Naive thymus-derived CD4-positive, alpha-beta T cell (primary cell): ENCODE measurements at regions of chr10 and their contacts with region 1.

Region 1: DNA sequence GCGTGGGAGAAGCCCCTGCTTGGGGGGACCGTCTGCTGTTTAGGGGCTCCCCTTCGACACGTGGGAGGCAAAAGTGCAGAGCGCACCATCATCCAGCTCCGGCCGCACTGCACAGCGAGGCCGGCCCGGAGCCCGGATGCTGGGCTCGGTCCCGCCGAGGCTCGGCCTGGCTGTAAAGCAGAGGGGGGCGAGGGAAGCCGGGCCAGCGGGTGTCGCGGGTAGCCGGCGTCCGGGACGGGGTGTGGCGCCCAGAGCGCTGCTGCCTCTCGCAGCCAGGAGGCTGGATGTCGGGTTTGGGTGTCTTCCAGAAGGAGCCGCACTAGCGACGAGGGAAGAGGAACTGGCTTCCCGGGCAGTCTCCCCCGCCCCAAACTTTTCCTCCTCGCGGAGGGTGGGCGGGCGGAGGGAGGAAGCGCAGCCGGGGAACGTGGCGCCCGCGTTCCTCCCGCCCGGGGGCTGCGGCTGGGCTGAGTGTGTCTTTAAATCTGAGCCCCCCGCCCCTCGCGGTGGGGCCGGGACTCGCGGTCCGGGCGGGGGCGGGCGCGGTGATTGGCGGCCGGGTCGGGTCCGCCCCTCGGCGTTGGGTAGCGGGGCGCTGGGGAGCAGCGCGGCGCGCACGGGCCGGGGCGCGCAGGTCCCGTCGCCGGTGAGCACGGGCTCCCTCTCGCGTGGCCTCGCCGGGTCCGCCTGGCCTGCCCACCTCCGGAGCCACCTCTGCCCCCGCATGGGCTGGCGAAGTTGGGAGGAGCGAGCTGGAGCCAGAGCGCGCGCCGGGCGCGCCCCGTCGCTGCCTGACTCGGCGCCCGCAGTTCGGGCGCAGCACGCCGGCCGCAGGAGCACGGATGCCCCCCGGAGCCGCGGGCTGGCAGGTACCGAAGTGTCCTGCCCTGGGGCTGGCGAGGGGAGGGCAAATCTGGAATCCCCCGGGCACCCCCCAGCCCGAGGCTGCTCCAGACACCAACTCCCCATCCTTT is at the start of gene PALD1:
- DNase-seq: peak in 5 of 9 donors; percentile 13 to 71 (median 24)
- ATAC-seq: no peak
- H3K4me3 ChIP-seq: peak within 1 kb of the TSS; percentile 56
- H3K4me3 Mint-ChIP-seq: peak within 1 kb of the TSS; percentile 78 to 90 (median 84)
- H3K27ac ChIP-seq: peak within 1 kb of the TSS; percentile 33
- H3K27ac Mint-ChIP-seq: peak within 1 kb of the TSS; percentile 56 to 93 (median 75)
- H3K4me1 ChIP-seq: peaks cover 29 to 51% of the 10 kb centered on the region in 2 donors
- H3K4me1 Mint-ChIP-seq: peaks cover 28 to 65% (median 56%) of the 10 kb centered on the region in 7 donors
- H3K27me3 ChIP-seq: peaks cover 0 to 4% of the 10 kb centered on the region in 2 donors
- H3K27me3 Mint-ChIP-seq: peaks cover 0 to 74% (median 0%) of the 10 kb centered on the region in 5 donors
- total RNA-seq, gene PALD1: 0.08 to 0.39 (median 0.19) TPM

Region 2: GRCh38 chr10:70169649-70170364 is 308.7 kb before region 1 on chr10:
- CTCF ChIA-PET with region 1: no interaction called
- POLR2A ChIA-PET with region 1: no interaction called
- intact Hi-C with region 1: loop called in 1 of 2 experiments (anchors 2 kb)
- DNase-seq: peak in 2 of 9 donors; percentile 8 to 30
- ATAC-seq: peak; percentile 18
- H3K4me3 ChIP-seq: peak overlapping the region; percentile 88
- H3K4me3 Mint-ChIP-seq: peak overlapping the region; percentile 86 to 97 (median 94)
- H3K27ac ChIP-seq: peak overlapping the region; percentile 95
- H3K27ac Mint-ChIP-seq: peak overlapping the region; percentile 83 to 98 (median 96)
- H3K4me1 ChIP-seq: peaks cover 47 to 49% of the 10 kb centered on the region in 2 donors
- H3K4me1 Mint-ChIP-seq: peaks cover 46 to 70% (median 65%) of the 10 kb centered on the region in 7 donors
- H3K27me3 ChIP-seq: no peaks in the 10 kb centered on the region
- H3K27me3 Mint-ChIP-seq: no peaks in the 10 kb centered on the region

Region 3: DNA sequence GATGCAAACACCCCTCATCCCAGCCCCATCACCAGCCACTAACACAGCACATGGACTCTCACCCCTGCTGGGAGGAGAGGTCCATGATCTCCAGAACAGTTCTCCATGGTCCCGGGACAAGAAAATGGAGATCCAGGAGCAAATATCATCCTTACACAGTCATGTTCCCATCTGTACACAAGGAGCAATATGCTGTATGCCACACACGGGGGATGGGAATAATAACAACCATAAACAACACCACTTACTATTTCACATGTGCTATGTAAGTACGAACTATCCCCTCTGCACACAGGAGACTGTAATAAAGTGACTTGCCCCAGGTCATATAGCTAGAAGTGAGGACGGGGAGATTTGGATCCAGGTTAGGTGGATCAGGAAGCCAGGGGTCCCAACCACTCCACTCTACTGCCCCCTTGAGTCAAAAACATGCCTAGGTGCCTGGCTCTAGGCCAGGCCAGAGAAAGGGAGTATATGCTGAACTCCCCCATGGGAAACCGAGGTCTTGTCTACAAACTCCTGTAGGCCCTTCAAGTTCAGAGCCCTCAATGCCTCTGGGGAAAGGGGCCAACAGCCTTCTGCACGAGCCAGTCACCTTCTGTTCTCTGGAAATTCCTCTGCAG is 130.1 kb before region 1 on chr10:
- CTCF ChIA-PET with region 1: no interaction called
- POLR2A ChIA-PET with region 1: no interaction called
- intact Hi-C with region 1: no loop called
- DNase-seq: peak in 2 of 9 donors; percentile 16 to 25
- ATAC-seq: peak; percentile 58
- H3K4me3 ChIP-seq: no peak overlapping the region
- H3K4me3 Mint-ChIP-seq: no peak overlapping the region
- H3K27ac ChIP-seq: no peak overlapping the region
- H3K27ac Mint-ChIP-seq: no peak overlapping the region
- H3K4me1 ChIP-seq: no peaks in the 10 kb centered on the region
- H3K4me1 Mint-ChIP-seq: peaks cover 0 to 3% (median 0%) of the 10 kb centered on the region in 7 donors
- H3K27me3 ChIP-seq: no peaks in the 10 kb centered on the region
- H3K27me3 Mint-ChIP-seq: no peaks in the 10 kb centered on the region

Region 4: GRCh38 chr10:70381471-70382421 is 96.7 kb before region 1 on chr10:
- CTCF ChIA-PET with region 1: no interaction called
- POLR2A ChIA-PET with region 1: no interaction called
- intact Hi-C with region 1: loop called (anchors 5 kb)
- DNase-seq: peak in 6 of 9 donors; percentile 25 to 53 (median 40)
- ATAC-seq: peak; percentile 43
- H3K4me3 ChIP-seq: peak overlapping the region; percentile 94
- H3K4me3 Mint-ChIP-seq: peak overlapping the region; percentile 82 to 92 (median 90)
- H3K27ac ChIP-seq: peak overlapping the region; percentile 32
- H3K27ac Mint-ChIP-seq: peak overlapping the region in 6 of 9 donors; percentile 17 to 86 (median 46)
- H3K4me1 ChIP-seq: peaks cover 4 to 6% of the 10 kb centered on the region in 2 donors
- H3K4me1 Mint-ChIP-seq: peaks cover 2 to 20% (median 10%) of the 10 kb centered on the region in 7 donors
- H3K27me3 ChIP-seq: no peaks in the 10 kb centered on the region
- H3K27me3 Mint-ChIP-seq: no peaks in the 10 kb centered on the region

Region 5: GRCh38 chr10:70445718-70446657 is 32.5 kb before region 1 on chr10:
- CTCF ChIA-PET with region 1: no interaction called
- POLR2A ChIA-PET with region 1: no interaction called
- intact Hi-C with region 1: no loop called
- DNase-seq: no peak
- ATAC-seq: no peak
- H3K4me3 ChIP-seq: no peak overlapping the region
- H3K4me3 Mint-ChIP-seq: no peak overlapping the region
- H3K27ac ChIP-seq: no peak overlapping the region
- H3K27ac Mint-ChIP-seq: no peak overlapping the region
- H3K4me1 ChIP-seq: peaks cover 5 to 9% of the 10 kb centered on the region in 2 donors
- H3K4me1 Mint-ChIP-seq: peaks cover under 1 to 10% (median 5%) of the 10 kb centered on the region in 7 donors
- H3K27me3 ChIP-seq: peaks cover 0 to 13% of the 10 kb centered on the region in 2 donors
- H3K27me3 Mint-ChIP-seq: peaks cover 11 to 47% (median 19%) of the 10 kb centered on the region in 5 donors

Region 6: GRCh38 chr10:70461215-70461986 is 17.1 kb before region 1 on chr10:
- CTCF ChIA-PET with region 1: interaction called, 6 read pairs
- POLR2A ChIA-PET with region 1: no interaction called
- intact Hi-C with region 1: loop called in 1 of 2 experiments (anchors 1 kb)
- DNase-seq: peak in 6 of 9 donors; percentile 29 to 52 (median 42)
- ATAC-seq: peak; percentile 69
- H3K4me3 ChIP-seq: no peak overlapping the region
- H3K4me3 Mint-ChIP-seq: peak overlapping the region in 1 of 10 donors; percentile 12
- H3K27ac ChIP-seq: no peak overlapping the region
- H3K27ac Mint-ChIP-seq: peak overlapping the region in 2 of 9 donors; percentile 10 to 66
- H3K4me1 ChIP-seq: no peaks in the 10 kb centered on the region
- H3K4me1 Mint-ChIP-seq: peaks cover 0 to 8% (median 3%) of the 10 kb centered on the region in 7 donors
- H3K27me3 ChIP-seq: peaks cover 0 to 4% of the 10 kb centered on the region in 2 donors
- H3K27me3 Mint-ChIP-seq: peaks cover 23 to 46% (median 38%) of the 10 kb centered on the region in 5 donors

Region 7: GRCh38 chr10:70493660-70494234 is 15.3 kb after region 1 on chr10:
- CTCF ChIA-PET with region 1: no interaction called
- POLR2A ChIA-PET with region 1: no interaction called
- intact Hi-C with region 1: loop called (anchors 2 kb)
- DNase-seq: no peak
- ATAC-seq: no peak
- H3K4me3 ChIP-seq: no peak overlapping the region
- H3K4me3 Mint-ChIP-seq: no peak overlapping the region
- H3K27ac ChIP-seq: no peak overlapping the region
- H3K27ac Mint-ChIP-seq: no peak overlapping the region
- H3K4me1 ChIP-seq: peaks cover 0 to 4% of the 10 kb centered on the region in 2 donors
- H3K4me1 Mint-ChIP-seq: peaks cover 18 to 26% (median 21%) of the 10 kb centered on the region in 7 donors
- H3K27me3 ChIP-seq: no peaks in the 10 kb centered on the region
- H3K27me3 Mint-ChIP-seq: peaks cover 0 to 11% (median 0%) of the 10 kb centered on the region in 5 donors

Region 8: GRCh38 chr10:70602665-70603448 is 124.4 kb after region 1 on chr10 and contains the start of gene PRF1:
- CTCF ChIA-PET with region 1: no interaction called
- POLR2A ChIA-PET with region 1: no interaction called
- intact Hi-C with region 1: loop called in 1 of 2 experiments (anchors 1 kb)
- DNase-seq: peak; percentile 42 to 79 (median 74)
- ATAC-seq: peak; percentile 85
- H3K4me3 ChIP-seq: peak within 1 kb of the TSS; percentile 88
- H3K4me3 Mint-ChIP-seq: peak within 1 kb of the TSS; percentile 82 to 99 (median 94)
- H3K27ac ChIP-seq: peak within 1 kb of the TSS; percentile 66
- H3K27ac Mint-ChIP-seq: peak within 1 kb of the TSS; percentile 83 to 98 (median 93)
- H3K4me1 ChIP-seq: peaks cover 28 to 37% of the 10 kb centered on the region in 2 donors
- H3K4me1 Mint-ChIP-seq: peaks cover 29 to 60% (median 51%) of the 10 kb centered on the region in 7 donors
- H3K27me3 ChIP-seq: no peaks in the 10 kb centered on the region
- H3K27me3 Mint-ChIP-seq: no peaks in the 10 kb centered on the region
- total RNA-seq, gene PRF1: 8.1 to 198 (median 30.7) TPM